ENCODE measurements at regions of chr1 and their contacts with region 1.

Region 1: GRCh38 chr1:156728597-156729462 is at the start of gene ISG20L2:
- DNase-seq: peak; percentile 98
- H3K4me3 Mint-ChIP-seq: no peak within 1 kb of the TSS
- H3K27ac Mint-ChIP-seq: peak within 1 kb of the TSS; percentile 99
- H3K4me1 Mint-ChIP-seq: peaks cover 23% of the 10 kb centered on the region
- H3K27me3 Mint-ChIP-seq: no peaks in the 10 kb centered on the region
- total RNA-seq, gene ISG20L2: 35.6 to 36.8 TPM

Region 2: DNA sequence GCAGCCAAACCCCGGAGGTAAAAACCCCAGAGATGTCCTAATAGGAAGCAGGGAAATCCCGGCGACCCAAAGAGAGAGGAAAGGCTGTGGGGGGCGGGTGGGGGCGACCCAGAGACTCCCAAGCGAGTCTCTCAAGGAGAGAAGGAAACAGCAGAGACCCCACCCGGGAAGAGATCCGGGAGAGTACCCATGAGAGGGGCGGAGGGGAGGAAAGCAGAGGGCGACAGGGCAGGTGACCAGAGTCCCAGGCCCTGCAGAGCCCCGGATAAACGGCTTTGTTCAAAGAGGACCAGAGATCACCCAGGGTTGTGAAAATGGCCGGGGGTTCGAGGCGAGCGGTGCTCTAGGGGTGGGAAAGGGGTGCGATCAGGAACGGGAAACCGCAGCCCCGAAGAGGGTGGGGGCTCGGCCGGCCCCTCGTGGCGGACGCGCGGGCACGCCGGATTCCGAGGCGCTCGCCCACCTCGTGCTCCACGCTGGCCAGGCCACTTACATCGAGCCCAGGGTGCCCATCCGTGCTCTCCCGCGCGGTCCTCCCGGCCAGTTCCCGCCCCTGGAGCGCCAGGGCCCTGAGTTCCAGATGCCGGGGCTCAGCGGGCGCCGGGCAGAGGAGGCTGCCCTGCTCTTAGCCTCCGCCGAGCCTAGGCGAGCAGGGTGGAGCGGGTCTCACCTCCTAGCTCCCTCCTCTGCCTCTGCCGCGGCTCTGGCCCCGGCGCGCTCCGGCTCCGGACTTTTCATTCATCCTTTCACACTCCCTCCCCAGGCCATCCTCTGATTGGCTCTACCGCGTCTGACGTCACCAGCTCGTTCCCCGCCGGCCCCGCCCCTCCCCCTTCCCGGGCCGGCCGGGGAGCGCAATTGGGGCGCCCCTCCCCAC is 307.5 kb before region 1 on chr1:
- CTCF ChIA-PET with region 1: no interaction called
- POLR2A ChIA-PET with region 1: no interaction called
- intact Hi-C with region 1: no loop called
- DNase-seq: peak; percentile 86
- H3K4me3 Mint-ChIP-seq: peak overlapping the region; percentile 73
- H3K27ac Mint-ChIP-seq: no peak overlapping the region
- H3K4me1 Mint-ChIP-seq: peaks cover 21% of the 10 kb centered on the region
- H3K27me3 Mint-ChIP-seq: peaks cover 49% of the 10 kb centered on the region

Region 3: DNA sequence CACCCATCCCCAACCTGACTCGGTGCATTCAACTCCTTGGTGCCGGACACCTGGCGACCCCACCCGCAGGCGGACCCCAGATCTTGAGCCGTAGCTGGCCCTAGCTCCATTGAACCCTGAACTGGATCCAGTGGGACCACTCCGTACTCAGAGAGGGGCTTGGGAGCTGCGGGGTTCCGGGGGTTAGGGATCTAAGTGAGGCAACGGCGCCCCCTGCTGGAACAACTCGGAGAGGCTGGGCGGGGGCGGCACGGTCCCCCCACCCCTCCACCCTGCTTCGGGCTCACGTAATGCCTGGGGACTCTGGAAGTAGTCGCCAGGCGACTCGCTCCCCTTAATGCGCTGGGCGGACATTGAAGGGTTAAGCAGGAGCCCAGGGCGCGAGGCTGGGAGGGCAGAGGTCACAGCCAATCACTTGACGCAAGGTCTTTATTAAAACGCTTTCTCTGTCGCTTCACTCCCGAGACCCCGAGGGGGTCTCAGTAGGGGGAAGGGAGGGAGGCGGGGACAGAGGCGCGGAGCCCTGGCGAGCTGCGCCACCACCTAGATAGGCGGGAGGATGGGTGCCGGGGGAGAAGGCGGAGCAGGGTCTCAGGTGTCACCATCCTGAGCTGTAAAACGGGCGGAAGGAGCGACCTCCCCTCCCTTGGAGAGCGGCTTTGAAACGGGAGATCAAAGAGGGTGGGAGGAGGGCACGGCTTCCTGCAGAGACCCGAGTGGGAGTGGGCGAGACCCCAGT is 22.7 kb before region 1 on chr1:
- CTCF ChIA-PET with region 1: interaction called, 1,179 read pairs
- POLR2A ChIA-PET with region 1: interaction called, 7 read pairs
- intact Hi-C with region 1: no loop called
- DNase-seq: peak; percentile 82
- H3K4me3 Mint-ChIP-seq: peak overlapping the region; percentile 75
- H3K27ac Mint-ChIP-seq: no peak overlapping the region
- H3K4me1 Mint-ChIP-seq: peaks cover 28% of the 10 kb centered on the region
- H3K27me3 Mint-ChIP-seq: peaks cover 24% of the 10 kb centered on the region

Region 4: DNA sequence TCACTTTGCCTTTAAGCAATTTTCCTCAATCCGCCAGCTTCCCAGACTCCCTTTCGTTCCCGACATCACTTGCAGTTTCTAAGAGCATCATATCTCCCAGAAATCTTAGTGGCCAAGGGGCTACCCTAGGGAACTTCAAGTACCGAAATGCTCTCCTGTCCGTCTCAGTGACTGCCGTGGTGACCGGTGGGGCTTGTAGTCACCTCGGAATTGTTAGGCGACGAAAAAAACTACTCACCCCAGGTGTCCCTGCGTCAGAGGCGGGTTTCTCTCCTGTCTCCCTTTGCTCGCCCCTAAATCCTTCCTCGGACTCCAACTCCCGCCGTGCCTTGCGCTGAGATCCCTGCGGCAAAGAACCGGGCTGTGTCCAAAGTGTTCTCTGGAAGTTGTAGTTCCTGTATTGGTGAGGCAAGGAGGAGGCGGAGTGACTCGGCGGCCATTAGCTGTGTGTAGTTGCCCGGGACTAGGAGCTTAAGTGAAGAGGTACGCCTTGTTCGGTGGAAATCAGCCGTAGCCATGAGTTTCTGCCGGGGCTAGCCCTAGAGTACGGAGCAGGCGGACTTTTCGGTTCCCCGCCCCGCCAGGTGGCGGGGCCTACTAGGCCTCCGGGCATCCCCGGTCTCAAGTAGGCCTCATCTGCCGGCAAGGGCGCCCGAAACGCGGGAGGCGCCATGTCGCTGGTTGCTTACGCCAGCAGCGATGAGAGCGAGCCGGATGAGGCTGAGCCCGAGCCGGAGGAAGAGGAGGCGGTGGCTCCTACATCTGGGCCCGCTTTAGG is 38.5 kb after region 1 on chr1 and contains the start of gene PRCC:
- CTCF ChIA-PET with region 1: interaction called, 155 read pairs
- POLR2A ChIA-PET with region 1: interaction called, 28 read pairs
- intact Hi-C with region 1: loop called (anchors 1 kb)
- DNase-seq: peak; percentile 99
- H3K4me3 Mint-ChIP-seq: no peak within 1 kb of the TSS
- H3K27ac Mint-ChIP-seq: no peak within 1 kb of the TSS
- H3K4me1 Mint-ChIP-seq: peaks cover 36% of the 10 kb centered on the region
- H3K27me3 Mint-ChIP-seq: no peaks in the 10 kb centered on the region
- total RNA-seq, gene PRCC: 58.6 to 67.2 TPM

Region 5: DNA sequence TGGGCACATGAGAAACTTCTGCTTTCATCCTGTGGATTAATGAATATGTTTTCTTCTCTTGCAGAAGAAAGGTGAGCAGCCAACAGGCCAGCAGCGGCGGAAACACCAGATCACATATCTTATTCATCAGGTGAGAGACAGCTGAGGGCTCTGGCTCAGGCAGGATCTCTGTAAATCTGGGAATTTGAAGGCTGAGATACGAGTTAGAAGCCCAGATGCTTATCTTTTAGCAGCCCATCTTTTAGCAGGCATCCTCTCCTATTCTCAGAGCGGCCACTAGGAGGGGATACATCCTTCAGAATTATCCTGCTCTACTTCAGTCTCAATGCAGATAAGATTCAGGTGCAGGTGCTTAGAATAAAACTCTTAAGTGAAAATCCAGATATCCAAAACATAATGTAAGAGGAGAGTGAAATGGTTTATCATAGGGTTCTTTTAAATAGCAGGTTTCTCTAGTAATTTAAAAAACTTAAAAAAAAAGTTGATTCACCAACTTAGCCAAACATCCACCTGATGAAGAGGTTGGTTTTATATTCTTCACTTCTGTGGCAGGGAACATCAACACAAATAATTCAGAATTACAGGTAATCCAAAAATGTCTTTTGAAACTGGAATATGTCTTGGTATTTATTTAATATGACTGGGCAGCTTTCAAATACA is 68.5 kb after region 1 on chr1:
- CTCF ChIA-PET with region 1: interaction called, 52 read pairs
- POLR2A ChIA-PET with region 1: no interaction called
- intact Hi-C with region 1: no loop called
- DNase-seq: peak; percentile 71
- H3K4me3 Mint-ChIP-seq: no peak overlapping the region
- H3K27ac Mint-ChIP-seq: no peak overlapping the region
- H3K4me1 Mint-ChIP-seq: peaks cover 21% of the 10 kb centered on the region
- H3K27me3 Mint-ChIP-seq: no peaks in the 10 kb centered on the region

Region 6: DNA sequence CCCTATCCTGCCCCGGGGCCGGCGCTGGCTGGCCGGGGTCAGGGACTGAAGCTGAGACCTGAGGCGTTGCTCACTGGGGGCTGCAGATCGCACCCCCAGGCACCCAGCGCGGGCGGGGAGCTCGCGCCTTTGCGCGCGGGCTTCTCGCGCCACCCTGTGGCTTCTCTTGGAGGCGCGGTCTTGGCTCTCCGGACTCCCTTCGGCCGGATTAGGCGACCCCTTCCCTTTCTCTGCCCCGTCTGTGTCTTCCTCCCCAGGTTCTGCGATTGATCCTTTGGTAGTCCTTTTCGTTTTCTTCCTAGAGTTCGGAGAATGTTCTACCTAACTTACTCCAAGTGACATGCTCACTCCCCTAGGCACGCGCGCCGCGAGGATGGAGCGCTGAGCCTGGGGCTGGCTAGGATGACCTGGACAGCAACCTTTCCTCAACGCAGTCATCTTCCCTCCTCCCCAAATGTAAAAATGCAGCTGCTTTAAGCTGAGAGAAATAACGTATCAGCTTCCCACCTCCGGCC is 131.3 kb after region 1 on chr1:
- CTCF ChIA-PET with region 1: interaction called, 121 read pairs
- POLR2A ChIA-PET with region 1: interaction called, 4 read pairs
- intact Hi-C with region 1: loop called (anchors 2 kb)
- DNase-seq: peak; percentile 66
- H3K4me3 Mint-ChIP-seq: peak overlapping the region; percentile 68
- H3K27ac Mint-ChIP-seq: no peak overlapping the region
- H3K4me1 Mint-ChIP-seq: peaks cover 44% of the 10 kb centered on the region
- H3K27me3 Mint-ChIP-seq: peaks cover 54% of the 10 kb centered on the region

Measured in activated CD4-positive, alpha-beta memory T cell treated with anti-CD3 and anti-CD28 coated beads for 36 hours (primary cell).